ENCODE measurements at regions of chr19 and their contacts with region 1.

Region 1: GRCh38 chr19:50376166-50377050 is at the start of gene NR1H2:
- DNase-seq: peak; percentile 89 to 97 (median 95)
- ATAC-seq: peak; percentile 94
- H3K4me3 ChIP-seq: peak within 1 kb of the TSS; percentile 99
- H3K4me3 Mint-ChIP-seq: peak within 1 kb of the TSS; percentile 92 to 100 (median 98)
- H3K27ac ChIP-seq: peak within 1 kb of the TSS; percentile 100
- H3K27ac Mint-ChIP-seq: peak within 1 kb of the TSS; percentile 99 to 100 (median 100)
- H3K4me1 ChIP-seq: peaks cover 4 to 10% of the 10 kb centered on the region in 2 donors
- H3K4me1 Mint-ChIP-seq: peaks cover 12 to 37% (median 24%) of the 10 kb centered on the region in 7 donors
- H3K27me3 ChIP-seq: no peaks in the 10 kb centered on the region
- H3K27me3 Mint-ChIP-seq: no peaks in the 10 kb centered on the region
- total RNA-seq, gene NR1H2: 66.6 to 284 (median 114) TPM

Region 2: DNA sequence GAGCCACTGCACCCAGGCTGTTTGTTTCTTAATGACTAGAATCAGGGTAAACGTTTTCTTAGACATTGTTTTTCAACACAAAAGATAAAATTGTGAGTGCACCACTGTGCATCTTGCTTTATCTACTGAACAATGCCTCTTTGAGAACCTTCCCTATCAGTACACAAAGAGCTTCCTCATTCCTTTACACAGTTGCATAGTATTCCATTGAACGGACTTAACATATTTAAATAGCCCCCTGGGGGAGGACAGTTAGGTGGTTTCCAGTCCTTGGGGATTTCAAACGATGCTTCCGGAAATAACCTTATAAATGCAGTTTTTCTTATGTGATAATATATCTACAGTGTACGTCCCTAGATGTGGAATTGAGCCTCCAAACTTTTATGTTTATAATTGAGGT is 16.4 kb after region 1 on chr19:
- CTCF ChIA-PET with region 1: no interaction called
- POLR2A ChIA-PET with region 1: no interaction called
- intact Hi-C with region 1: no loop called
- DNase-seq: no peak
- ATAC-seq: no peak
- H3K4me3 ChIP-seq: no peak overlapping the region
- H3K4me3 Mint-ChIP-seq: no peak overlapping the region
- H3K27ac ChIP-seq: no peak overlapping the region
- H3K27ac Mint-ChIP-seq: no peak overlapping the region
- H3K4me1 ChIP-seq: no peaks in the 10 kb centered on the region
- H3K4me1 Mint-ChIP-seq: peaks cover 0 to 12% (median 5%) of the 10 kb centered on the region in 7 donors
- H3K27me3 ChIP-seq: no peaks in the 10 kb centered on the region
- H3K27me3 Mint-ChIP-seq: no peaks in the 10 kb centered on the region

Region 3: GRCh38 chr19:50476224-50476942 is 100.0 kb after region 1 on chr19 and contains the starts of genes EMC10 and GARIN5A:
- CTCF ChIA-PET with region 1: no interaction called
- POLR2A ChIA-PET with region 1: interaction called, 3 read pairs
- intact Hi-C with region 1: loop called in 1 of 2 experiments (anchors 1 kb)
- DNase-seq: peak; percentile 92 to 96 (median 95)
- ATAC-seq: peak; percentile 97
- H3K4me3 ChIP-seq: peak within 1 kb of the TSS; percentile 96
- H3K4me3 Mint-ChIP-seq: peak within 1 kb of the TSS; percentile 94 to 99 (median 98)
- H3K27ac ChIP-seq: peak within 1 kb of the TSS; percentile 96
- H3K27ac Mint-ChIP-seq: peak within 1 kb of the TSS; percentile 88 to 98 (median 96)
- H3K4me1 ChIP-seq: peaks cover 14 to 19% of the 10 kb centered on the region in 2 donors
- H3K4me1 Mint-ChIP-seq: peaks cover 21 to 36% (median 27%) of the 10 kb centered on the region in 7 donors
- H3K27me3 ChIP-seq: no peaks in the 10 kb centered on the region
- H3K27me3 Mint-ChIP-seq: no peaks in the 10 kb centered on the region
- total RNA-seq, gene EMC10: 75.5 to 95.2 (median 88.1) TPM
- total RNA-seq, gene GARIN5A: 0.59 to 0.93 (median 0.68) TPM in 4 of 5 experiments, not detected in the other

Region 4: GRCh38 chr19:50705422-50706019 is 329.1 kb after region 1 on chr19:
- CTCF ChIA-PET with region 1: no interaction called
- POLR2A ChIA-PET with region 1: no interaction called
- intact Hi-C with region 1: no loop called
- DNase-seq: peak in 2 of 9 donors; percentile 20 to 34
- ATAC-seq: peak; percentile 67
- H3K4me3 ChIP-seq: no peak overlapping the region
- H3K4me3 Mint-ChIP-seq: no peak overlapping the region
- H3K27ac ChIP-seq: no peak overlapping the region
- H3K27ac Mint-ChIP-seq: no peak overlapping the region
- H3K4me1 ChIP-seq: no peaks in the 10 kb centered on the region
- H3K4me1 Mint-ChIP-seq: peaks cover 0 to 2% (median 0%) of the 10 kb centered on the region in 7 donors
- H3K27me3 ChIP-seq: no peaks in the 10 kb centered on the region
- H3K27me3 Mint-ChIP-seq: peaks cover 21 to 46% (median 30%) of the 10 kb centered on the region in 5 donors

Measured in naive thymus-derived CD4-positive, alpha-beta T cell (primary cell).